Breast epithelium (tissue), 4 donors: ENCODE measurements at regions of chr1 and their contacts with region 1.

Region 1: GRCh38 chr1:45583264-45583665 is 576 bp upstream of the NASP start:
- DNase-seq: peak; percentile 95 to 96
- H3K4me3 ChIP-seq: peak overlapping the region; percentile 93 to 99 (median 98)
- H3K27ac ChIP-seq: peak overlapping the region; percentile 93 to 96
- H3K4me1 ChIP-seq: peaks cover 0 to 7% of the 10 kb centered on the region in 2 donors
- H3K27me3 ChIP-seq: no peaks in the 10 kb centered on the region
- CTCF ChIP-seq: no peak
- POLR2A ChIP-seq: no peak

Region 2: DNA sequence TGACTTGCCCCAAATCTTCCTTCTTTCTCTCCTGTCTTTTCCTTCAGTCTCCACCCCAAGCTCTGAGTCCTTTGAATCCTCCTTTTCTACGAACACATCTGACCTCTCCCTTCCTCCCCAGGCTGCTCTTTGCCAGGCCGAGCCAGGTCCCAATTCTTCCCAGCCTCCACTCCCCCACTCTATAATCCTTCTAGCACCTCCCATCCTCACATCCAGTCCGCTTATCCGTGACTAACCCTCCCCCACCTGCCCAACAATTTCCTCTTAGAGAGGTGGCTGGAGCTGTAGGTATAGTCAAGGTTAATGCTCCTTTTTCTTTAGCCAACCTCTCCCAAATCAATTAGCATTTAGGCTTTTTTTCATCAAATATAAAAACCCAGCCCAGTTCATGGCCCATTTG is 266.1 kb before region 1 on chr1:
- intact Hi-C with region 1: no loop called
- DNase-seq: no peak
- H3K4me3 ChIP-seq: no peak overlapping the region
- H3K27ac ChIP-seq: no peak overlapping the region
- H3K4me1 ChIP-seq: no peaks in the 10 kb centered on the region
- H3K27me3 ChIP-seq: no peaks in the 10 kb centered on the region
- CTCF ChIP-seq: no peak
- POLR2A ChIP-seq: no peak

Region 3: GRCh38 chr1:45686317-45687013 is 103.2 kb after region 1 on chr1 and contains the start of gene GPBP1L1:
- intact Hi-C with region 1: loop called (anchors 10 kb)
- DNase-seq: peak; percentile 96 to 97
- H3K4me3 ChIP-seq: peak within 1 kb of the TSS; percentile 87 to 91 (median 90)
- H3K27ac ChIP-seq: peak within 1 kb of the TSS; percentile 98 to 100
- H3K4me1 ChIP-seq: peaks cover 0 to 5% of the 10 kb centered on the region in 2 donors
- H3K27me3 ChIP-seq: no peaks in the 10 kb centered on the region
- CTCF ChIP-seq: peak in 1 of 3 donors; percentile 35
- POLR2A ChIP-seq: peak; percentile 75
- total RNA-seq, gene GPBP1L1: 103 to 195 (median 114) TPM